Right cardiac atrium (tissue), 5 donors: ENCODE measurements at regions of chr16 and their contacts with region 1.

Region 1: GRCh38 chr16:14070877-14071575 is at the start of gene MRTFB:
- DNase-seq: peak; percentile 82 to 94 (median 94)
- ATAC-seq: peak; percentile 91 to 93
- H3K4me3 ChIP-seq: peak within 1 kb of the TSS; percentile 55
- H3K27ac ChIP-seq: peak within 1 kb of the TSS; percentile 55
- H3K4me1 ChIP-seq: peaks cover 2% of the 10 kb centered on the region
- H3K27me3 ChIP-seq: no peaks in the 10 kb centered on the region
- total RNA-seq, gene MRTFB: 41.3 to 61.8 (median 49.1) TPM

Region 2: DNA sequence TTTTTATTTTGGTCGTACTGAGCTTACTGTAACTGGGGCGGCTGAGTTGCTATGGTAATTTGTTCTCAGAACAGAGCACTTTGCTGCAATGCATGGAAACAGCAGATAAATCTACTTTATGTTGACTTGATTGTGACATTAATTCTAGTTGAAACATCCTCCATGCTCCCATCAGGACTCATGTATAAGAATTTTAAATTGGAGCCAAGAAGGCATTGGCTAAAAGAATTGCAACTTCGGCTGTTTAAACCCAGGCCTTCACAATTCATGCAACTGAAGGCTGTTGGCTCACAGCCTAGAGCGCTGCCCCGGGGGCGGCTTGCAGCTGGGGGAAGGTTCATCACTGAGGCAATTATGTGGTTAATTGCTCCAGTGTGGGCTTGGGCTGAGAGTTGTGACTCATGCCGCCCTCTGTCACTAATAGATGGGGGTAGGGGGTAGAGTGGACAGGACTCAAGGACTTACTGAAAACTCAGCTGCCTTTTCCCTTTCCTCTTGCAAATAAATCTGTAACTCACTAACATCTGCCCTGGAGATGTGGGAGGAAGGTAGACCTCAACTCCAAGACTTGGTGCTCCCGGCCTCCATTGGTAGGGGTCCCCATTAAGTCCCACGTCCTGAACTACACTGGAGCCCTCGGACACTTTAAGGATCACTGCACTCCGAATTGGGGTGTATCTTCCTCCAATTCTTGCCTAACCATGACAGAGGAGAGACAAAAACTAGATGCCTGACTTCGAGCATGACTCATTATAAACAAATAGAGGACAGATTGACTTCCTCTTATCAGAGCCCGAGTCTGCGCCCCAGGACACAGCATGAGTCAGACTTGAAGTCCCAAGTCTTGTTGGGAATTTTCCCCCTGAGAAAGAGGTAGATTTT is 113.6 kb before region 1 on chr16:
- intact Hi-C with region 1: loop called in 1 of 4 experiments (anchors 10 kb)
- DNase-seq: peak; percentile 68 to 86 (median 79)
- ATAC-seq: peak; percentile 94 to 97
- H3K4me3 ChIP-seq: peak overlapping the region; percentile 46
- H3K27ac ChIP-seq: peak overlapping the region; percentile 99
- H3K4me1 ChIP-seq: peaks cover 5% of the 10 kb centered on the region
- H3K27me3 ChIP-seq: no peaks in the 10 kb centered on the region

Region 3: GRCh38 chr16:13997933-13998332 is 73.1 kb before region 1 on chr16:
- intact Hi-C with region 1: loop called in 1 of 4 experiments (anchors 5 kb)
- DNase-seq: no peak
- ATAC-seq: no peak
- H3K4me3 ChIP-seq: no peak overlapping the region
- H3K27ac ChIP-seq: peak overlapping the region; percentile 10
- H3K4me1 ChIP-seq: peaks cover 16% of the 10 kb centered on the region
- H3K27me3 ChIP-seq: no peaks in the 10 kb centered on the region

Region 4: GRCh38 chr16:14024300-14024699 is 46.7 kb before region 1 on chr16:
- intact Hi-C with region 1: loop called in 1 of 4 experiments (anchors 10 kb)
- DNase-seq: no peak
- ATAC-seq: no peak
- H3K4me3 ChIP-seq: no peak overlapping the region
- H3K27ac ChIP-seq: no peak overlapping the region
- H3K4me1 ChIP-seq: no peaks in the 10 kb centered on the region
- H3K27me3 ChIP-seq: no peaks in the 10 kb centered on the region

Region 5: GRCh38 chr16:14186007-14186794 is 115.2 kb after region 1 on chr16:
- intact Hi-C with region 1: loop called in 1 of 4 experiments (anchors 5 kb)
- DNase-seq: peak; percentile 30 to 72 (median 69)
- ATAC-seq: peak; percentile 77 to 82
- H3K4me3 ChIP-seq: peak overlapping the region; percentile 73
- H3K27ac ChIP-seq: peak overlapping the region; percentile 97
- H3K4me1 ChIP-seq: peaks cover 4% of the 10 kb centered on the region
- H3K27me3 ChIP-seq: no peaks in the 10 kb centered on the region